Stomach (tissue), 19 donors: ENCODE measurements at regions of chr17 and their contacts with region 1.

Region 1: DNA sequence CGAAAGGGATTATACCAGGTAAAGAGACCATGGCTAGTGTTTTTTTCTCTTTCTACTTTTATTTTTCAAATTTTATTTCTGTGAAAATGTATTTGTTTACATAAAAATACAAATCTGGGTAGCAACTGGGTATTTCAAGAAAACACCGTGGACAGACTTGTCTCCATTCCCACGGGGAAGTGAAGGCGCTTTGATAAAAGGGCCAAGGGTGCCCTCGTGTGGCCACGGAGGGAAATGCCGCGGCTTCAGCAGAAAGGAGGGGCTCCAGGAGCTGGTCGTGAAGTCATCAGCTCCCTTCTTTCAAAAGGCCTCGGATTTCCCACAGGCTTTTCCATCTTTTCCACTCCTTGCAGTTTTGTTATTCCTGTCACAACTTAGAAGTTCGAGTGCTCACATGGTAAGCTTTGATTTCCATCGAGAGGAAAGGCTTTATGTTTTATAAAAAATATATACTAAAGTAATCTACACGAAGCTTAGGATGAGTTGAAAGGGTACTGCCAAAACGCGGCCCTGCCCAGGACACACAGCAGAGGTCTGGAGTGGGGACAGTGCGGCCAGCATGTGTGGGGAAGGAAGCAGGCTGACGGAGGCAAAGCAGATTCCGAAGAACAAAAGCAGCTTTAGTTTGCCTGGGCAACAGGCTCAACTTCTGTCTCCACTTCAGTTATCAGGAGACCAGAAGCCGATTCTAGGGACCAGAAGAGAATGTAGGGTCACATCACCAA is 15.3 kb upstream of the MNT start:
- DNase-seq: peak; percentile 95 to 96
- H3K4me3 ChIP-seq: no peak overlapping the region
- H3K27ac ChIP-seq: peak overlapping the region in 3 of 5 donors; percentile 38 to 73 (median 63)
- H3K4me1 ChIP-seq: peaks cover 8 to 62% (median 26%) of the 10 kb centered on the region in 4 donors
- H3K27me3 ChIP-seq: no peaks in the 10 kb centered on the region
- CTCF ChIP-seq: peak in 6 of 7 experiments; percentile 69 to 99 (median 96)
- EP300 ChIP-seq: no peak
- POLR2A ChIP-seq: no peak

Region 2: DNA sequence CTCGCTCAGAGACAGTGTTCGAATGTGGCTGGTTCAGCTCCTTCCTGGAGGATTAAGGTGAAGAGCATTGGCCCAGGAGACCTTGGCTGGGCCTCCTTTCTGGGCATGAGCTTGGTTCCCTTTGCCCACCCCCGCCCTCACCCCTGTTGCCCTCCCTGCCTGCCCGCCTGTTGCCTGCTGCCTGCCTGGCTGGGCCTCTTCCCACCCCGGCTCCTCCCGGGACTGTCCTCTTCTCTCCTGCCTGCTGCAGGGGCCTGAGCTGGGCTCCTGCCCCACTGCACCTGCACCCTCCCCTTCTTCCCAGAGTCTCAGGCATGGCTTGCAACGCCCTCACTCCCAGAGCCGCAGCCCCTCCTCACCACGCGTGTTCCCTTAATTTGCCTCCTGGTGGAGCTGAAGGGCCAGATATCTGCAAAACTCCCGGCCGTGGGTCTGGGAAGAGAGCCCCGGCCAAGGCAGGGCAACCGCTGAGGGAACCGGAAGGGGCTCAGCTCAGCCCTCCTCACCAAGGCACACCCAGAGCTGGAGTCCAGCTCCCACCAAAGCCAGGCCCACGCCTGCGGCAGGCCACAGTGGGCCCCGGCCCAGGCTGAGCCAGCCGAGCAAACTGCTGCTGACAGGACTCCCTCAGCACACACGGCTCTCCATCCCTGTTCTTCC is 46.5 kb before region 1 on chr17:
- intact Hi-C with region 1: loop called (anchors 10 kb)
- DNase-seq: no peak
- H3K4me3 ChIP-seq: no peak overlapping the region
- H3K27ac ChIP-seq: peak overlapping the region in 2 of 5 donors; percentile 8 to 62
- H3K4me1 ChIP-seq: peaks cover 0 to 26% (median 11%) of the 10 kb centered on the region in 4 donors
- H3K27me3 ChIP-seq: no peaks in the 10 kb centered on the region
- CTCF ChIP-seq: no peak
- EP300 ChIP-seq: no peak
- POLR2A ChIP-seq: no peak

Region 3: DNA sequence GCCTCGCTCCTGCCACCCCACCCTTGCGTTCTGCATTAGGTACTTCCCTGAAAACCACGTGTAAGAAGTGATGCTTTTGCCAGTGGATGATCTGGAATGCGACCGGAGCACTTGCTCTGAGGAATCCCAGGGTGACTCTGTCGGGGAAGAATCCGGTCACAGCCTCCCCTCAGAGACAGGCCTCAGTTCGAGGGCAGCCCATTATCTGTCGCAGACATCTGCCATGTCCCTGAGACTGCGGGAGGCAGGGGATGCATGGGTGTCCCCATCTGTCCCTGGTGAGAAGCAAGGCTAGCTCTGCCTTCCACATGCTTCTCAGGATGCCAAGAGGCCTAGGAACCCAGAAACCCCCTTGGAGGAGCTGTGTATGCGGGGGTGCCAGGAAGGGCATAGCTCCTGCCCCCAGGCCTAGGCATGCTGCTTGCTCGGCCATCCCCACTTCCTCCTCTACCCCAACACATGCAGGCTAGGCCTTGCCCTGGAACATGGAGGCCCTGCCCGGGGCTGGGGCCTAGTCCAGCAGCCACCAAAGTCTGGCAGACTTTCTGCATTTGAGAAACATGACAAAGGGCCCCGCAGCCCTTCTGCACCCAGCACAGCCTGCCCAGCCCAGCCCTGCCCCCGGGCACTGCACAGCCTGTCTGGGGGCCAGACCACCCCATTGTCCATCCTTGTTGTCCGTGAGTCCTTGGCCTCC is 35.8 kb before region 1 on chr17:
- intact Hi-C with region 1: loop called (anchors 5 kb)
- DNase-seq: no peak
- H3K4me3 ChIP-seq: no peak overlapping the region
- H3K27ac ChIP-seq: peak overlapping the region in 1 of 5 donors; percentile 29
- H3K4me1 ChIP-seq: peaks cover 5 to 29% (median 21%) of the 10 kb centered on the region in 4 donors
- H3K27me3 ChIP-seq: no peaks in the 10 kb centered on the region
- CTCF ChIP-seq: no peak
- EP300 ChIP-seq: no peak
- POLR2A ChIP-seq: no peak

Region 4: DNA sequence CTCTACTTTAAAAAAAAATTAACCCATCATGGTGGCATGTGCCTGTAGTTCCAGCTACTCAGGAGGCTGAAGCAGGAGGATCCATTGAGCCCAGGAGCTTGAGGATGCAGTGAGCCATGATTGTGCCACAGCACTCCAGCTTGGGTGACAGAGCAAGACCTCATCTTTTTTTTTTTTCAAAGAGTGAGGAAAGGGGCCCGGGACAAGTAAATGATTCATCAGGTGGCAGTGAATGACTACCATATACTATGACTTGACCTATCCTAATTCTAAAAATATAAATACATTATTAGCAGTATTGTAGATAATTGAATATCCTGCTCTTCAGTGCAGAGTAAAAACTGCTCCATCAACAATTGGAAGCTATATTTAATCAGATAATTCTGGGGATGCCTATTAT is 240.1 kb after region 1 on chr17:
- intact Hi-C with region 1: no loop called
- DNase-seq: no peak
- H3K4me3 ChIP-seq: no peak overlapping the region
- H3K27ac ChIP-seq: no peak overlapping the region
- H3K4me1 ChIP-seq: peaks cover 0 to 42% (median 21%) of the 10 kb centered on the region in 4 donors
- H3K27me3 ChIP-seq: no peaks in the 10 kb centered on the region
- CTCF ChIP-seq: no peak
- EP300 ChIP-seq: no peak
- POLR2A ChIP-seq: no peak

Region 5: GRCh38 chr17:3256575-3256974 is 840.4 kb after region 1 on chr17:
- intact Hi-C with region 1: no loop called
- DNase-seq: no peak
- H3K4me3 ChIP-seq: no peak overlapping the region
- H3K27ac ChIP-seq: no peak overlapping the region
- H3K4me1 ChIP-seq: no peaks in the 10 kb centered on the region
- H3K27me3 ChIP-seq: no peaks in the 10 kb centered on the region
- CTCF ChIP-seq: no peak
- EP300 ChIP-seq: no peak
- POLR2A ChIP-seq: no peak